Activated CD4-positive, alpha-beta T cell treated with anti-CD3 and anti-CD28 coated beads for 36 hours (primary cell): ENCODE measurements at regions of chr19 and their contacts with region 1.

Region 1: DNA sequence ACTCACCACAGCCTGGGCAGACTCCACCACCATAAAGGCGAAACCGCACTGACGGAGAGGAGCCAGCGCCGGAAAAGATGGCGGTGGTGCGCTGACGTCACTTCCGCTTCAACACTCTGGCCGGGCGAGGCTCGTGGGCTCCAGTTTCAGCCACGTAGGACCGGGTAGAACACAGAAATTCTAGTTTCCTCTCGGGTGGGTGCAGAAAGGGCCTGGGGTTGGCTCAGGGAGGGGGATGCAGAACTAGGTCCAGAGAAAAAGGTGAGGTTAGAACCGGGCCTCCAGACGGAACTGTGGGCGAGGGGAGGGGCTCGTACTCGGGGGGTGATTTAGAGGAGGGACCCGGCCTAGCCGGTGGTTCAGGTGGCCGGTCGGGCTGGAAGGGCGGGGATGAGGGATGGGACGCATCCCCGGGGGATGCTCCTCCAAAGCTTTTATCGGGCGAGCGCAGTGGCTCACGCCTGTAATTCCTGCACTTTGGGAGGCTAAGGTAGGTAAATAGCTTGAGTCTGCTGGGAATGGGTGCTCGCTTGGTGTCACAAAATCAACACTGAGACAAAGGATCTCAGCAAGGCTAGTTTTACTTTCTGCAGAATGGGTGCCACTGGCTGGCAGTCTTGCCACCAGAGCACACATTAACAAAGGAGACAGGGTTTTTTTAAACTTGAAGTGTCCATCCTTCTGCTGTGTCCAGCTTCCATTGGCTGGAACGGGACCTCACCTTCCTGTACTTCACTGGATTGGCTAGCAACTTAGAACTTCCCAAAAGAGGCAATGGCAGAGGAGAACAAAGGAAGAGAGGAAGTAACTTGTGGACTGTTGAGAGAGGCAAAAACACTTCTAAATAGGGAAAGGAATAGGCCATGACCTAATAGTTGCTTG is at the start of gene ZNF561:
- DNase-seq: peak; percentile 93
- ATAC-seq: peak; percentile 89
- H3K4me3 Mint-ChIP-seq: peak within 1 kb of the TSS; percentile 89
- H3K27ac Mint-ChIP-seq: peak within 1 kb of the TSS; percentile 96
- H3K4me1 Mint-ChIP-seq: peaks cover 23% of the 10 kb centered on the region
- H3K27me3 Mint-ChIP-seq: no peaks in the 10 kb centered on the region
- total RNA-seq, gene ZNF561: 19.1 to 22.7 TPM

Region 2: GRCh38 chr19:9140159-9140874 is 481.1 kb before region 1 on chr19 and contains the start of gene ZNF317:
- CTCF ChIA-PET with region 1: interaction called, 3 read pairs
- POLR2A ChIA-PET with region 1: no interaction called
- intact Hi-C with region 1: loop called (anchors 1 to 5 kb)
- DNase-seq: peak; percentile 94
- ATAC-seq: peak; percentile 93
- H3K4me3 Mint-ChIP-seq: peak within 1 kb of the TSS; percentile 99
- H3K27ac Mint-ChIP-seq: peak within 1 kb of the TSS; percentile 96
- H3K4me1 Mint-ChIP-seq: peaks cover 38% of the 10 kb centered on the region
- H3K27me3 Mint-ChIP-seq: peaks cover 1% of the 10 kb centered on the region
- total RNA-seq, gene ZNF317: 39.0 to 39.8 TPM

Region 3: DNA sequence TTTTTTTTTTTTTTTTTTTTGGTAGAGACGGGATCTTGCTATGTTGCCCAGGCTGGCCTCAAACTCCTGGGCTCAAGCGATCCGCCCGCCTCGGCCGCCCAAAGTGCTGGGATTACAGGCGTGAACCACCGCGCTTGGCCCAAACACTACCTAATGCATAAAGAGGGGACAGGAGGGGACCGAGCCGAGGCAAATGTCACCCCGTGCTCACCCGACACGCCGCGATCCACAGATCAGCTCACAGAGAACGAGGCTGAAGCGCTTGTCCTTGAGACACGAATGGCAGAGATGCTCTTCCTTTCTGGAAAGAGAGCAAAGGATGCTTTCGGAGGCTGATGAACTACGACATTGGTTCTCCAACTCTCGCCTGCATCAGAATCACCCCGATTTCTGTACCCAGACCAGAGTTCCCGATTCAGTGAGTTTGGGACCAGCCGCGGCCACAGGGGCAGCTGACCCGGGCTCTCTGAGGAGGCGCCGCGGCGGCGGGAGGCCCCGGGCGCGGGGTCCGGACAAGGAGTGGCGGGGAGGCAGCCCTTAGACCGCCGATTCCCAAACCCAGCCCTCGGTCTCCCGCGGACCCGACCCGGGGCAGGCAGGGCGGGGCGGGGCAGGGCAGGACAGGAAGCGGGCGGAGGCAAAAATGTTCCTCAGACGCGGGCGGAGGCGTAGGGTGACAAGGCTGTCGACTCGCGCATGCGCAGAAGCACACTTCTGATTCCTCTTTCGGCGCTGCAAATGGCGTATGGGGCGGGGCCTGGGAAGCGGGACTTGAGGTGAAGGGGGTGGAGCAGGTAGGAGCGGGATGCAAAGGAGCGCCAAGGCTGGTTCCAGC is 312.0 kb before region 1 on chr19 and contains the start of gene ZNF699:
- CTCF ChIA-PET with region 1: no interaction called
- POLR2A ChIA-PET with region 1: no interaction called
- intact Hi-C with region 1: loop called in 1 of 2 experiments (anchors 1 kb)
- DNase-seq: peak; percentile 100
- ATAC-seq: peak; percentile 90
- H3K4me3 Mint-ChIP-seq: peak within 1 kb of the TSS; percentile 97
- H3K27ac Mint-ChIP-seq: peak within 1 kb of the TSS; percentile 97
- H3K4me1 Mint-ChIP-seq: peaks cover 13% of the 10 kb centered on the region
- H3K27me3 Mint-ChIP-seq: no peaks in the 10 kb centered on the region
- total RNA-seq, gene ZNF699: 6.7 to 7.1 TPM

Region 4: DNA sequence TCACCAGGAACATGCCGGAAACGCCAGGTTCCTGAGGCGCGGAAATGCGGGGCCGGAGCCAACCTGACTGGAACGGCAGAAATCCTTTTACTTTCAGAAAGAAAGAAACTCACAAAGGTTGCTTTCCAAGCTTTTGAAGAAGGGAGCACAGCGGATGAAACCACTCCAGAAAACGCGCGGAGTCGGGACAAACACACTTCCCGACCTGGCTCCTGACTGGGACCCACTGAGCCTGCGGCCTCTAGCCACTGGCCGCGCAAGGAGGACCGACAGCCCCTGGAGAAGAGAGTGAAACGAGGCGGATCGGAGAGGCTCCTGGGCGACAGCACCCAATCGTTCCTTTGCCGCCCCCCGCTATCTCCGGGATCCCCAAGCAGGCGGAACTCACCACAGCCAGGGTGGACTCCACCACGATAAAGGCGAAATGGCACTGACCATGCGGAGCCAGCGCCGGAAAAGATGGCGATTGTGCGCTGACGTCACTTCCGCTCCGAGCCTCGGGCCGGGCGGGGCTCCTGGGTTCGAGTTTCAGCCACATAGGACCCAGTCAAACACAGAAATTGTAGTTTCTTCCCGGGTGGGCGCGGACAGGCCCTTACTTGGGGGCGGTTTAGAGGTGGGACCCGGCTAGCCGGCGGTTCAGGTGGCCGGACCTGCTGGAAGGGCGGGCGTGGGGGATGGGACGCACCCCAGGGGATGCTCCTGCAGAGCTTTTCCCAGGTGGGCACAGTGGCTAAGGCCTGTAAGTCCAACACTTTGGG is 37.1 kb before region 1 on chr19 and contains the start of gene ZNF121:
- CTCF ChIA-PET with region 1: interaction called, 3 read pairs
- POLR2A ChIA-PET with region 1: no interaction called
- intact Hi-C with region 1: loop called (anchors 1 kb)
- DNase-seq: peak; percentile 91
- ATAC-seq: peak; percentile 82
- H3K4me3 Mint-ChIP-seq: peak within 1 kb of the TSS; percentile 93
- H3K27ac Mint-ChIP-seq: peak within 1 kb of the TSS; percentile 94
- H3K4me1 Mint-ChIP-seq: peaks cover 29% of the 10 kb centered on the region
- H3K27me3 Mint-ChIP-seq: peaks cover 4% of the 10 kb centered on the region
- total RNA-seq, gene ZNF121: 71.4 to 75.3 TPM

Region 5: DNA sequence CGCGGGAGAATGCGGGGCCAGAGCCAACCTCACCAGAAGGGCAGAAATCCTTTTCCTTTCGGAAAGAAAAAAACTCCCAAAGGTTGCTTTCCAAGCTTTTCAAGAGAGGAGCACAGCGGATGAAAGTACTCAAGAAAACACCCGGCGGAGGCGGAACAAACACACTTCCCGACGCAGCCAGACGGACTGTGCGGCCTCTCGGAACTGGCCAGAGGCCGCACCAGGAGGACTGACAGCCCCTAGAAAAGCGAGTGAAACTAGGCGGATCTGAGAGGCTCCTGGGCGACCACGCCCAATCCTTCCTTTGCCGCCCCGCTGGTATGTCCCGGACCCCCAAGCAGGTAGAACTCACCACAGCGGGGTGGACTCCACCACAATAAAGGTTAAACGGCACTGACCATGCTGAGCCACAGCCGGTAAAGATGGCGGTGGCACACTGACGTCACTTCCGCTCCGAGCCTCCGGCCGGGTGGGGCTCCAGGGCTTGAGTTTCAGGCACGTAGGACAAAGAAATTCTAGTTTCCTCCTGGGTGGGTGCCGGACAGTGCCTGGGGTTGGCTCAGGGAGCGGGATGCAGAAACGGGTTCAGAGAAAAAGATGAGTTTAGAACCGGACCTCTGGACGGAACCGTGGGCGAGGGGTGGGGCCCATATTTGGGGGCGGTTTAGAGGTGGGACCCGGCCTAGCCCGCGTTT is 53.4 kb after region 1 on chr19 and contains the start of gene ZNF562:
- CTCF ChIA-PET with region 1: no interaction called
- POLR2A ChIA-PET with region 1: no interaction called
- intact Hi-C with region 1: loop called (anchors 1 to 2 kb)
- DNase-seq: peak; percentile 91
- ATAC-seq: peak; percentile 78
- H3K4me3 Mint-ChIP-seq: peak within 1 kb of the TSS; percentile 94
- H3K27ac Mint-ChIP-seq: peak within 1 kb of the TSS; percentile 97
- H3K4me1 Mint-ChIP-seq: peaks cover 30% of the 10 kb centered on the region
- H3K27me3 Mint-ChIP-seq: no peaks in the 10 kb centered on the region
- total RNA-seq, gene ZNF562: 29.9 to 39.7 TPM

Region 6: GRCh38 chr19:9785367-9786331 is 164.3 kb after region 1 on chr19:
- CTCF ChIA-PET with region 1: no interaction called
- POLR2A ChIA-PET with region 1: no interaction called
- intact Hi-C with region 1: loop called in 1 of 2 experiments (anchors 1 kb)
- DNase-seq: peak; percentile 100
- ATAC-seq: peak; percentile 89
- H3K4me3 Mint-ChIP-seq: peak overlapping the region; percentile 84
- H3K27ac Mint-ChIP-seq: peak overlapping the region; percentile 98
- H3K4me1 Mint-ChIP-seq: peaks cover 26% of the 10 kb centered on the region
- H3K27me3 Mint-ChIP-seq: no peaks in the 10 kb centered on the region

Region 7: DNA sequence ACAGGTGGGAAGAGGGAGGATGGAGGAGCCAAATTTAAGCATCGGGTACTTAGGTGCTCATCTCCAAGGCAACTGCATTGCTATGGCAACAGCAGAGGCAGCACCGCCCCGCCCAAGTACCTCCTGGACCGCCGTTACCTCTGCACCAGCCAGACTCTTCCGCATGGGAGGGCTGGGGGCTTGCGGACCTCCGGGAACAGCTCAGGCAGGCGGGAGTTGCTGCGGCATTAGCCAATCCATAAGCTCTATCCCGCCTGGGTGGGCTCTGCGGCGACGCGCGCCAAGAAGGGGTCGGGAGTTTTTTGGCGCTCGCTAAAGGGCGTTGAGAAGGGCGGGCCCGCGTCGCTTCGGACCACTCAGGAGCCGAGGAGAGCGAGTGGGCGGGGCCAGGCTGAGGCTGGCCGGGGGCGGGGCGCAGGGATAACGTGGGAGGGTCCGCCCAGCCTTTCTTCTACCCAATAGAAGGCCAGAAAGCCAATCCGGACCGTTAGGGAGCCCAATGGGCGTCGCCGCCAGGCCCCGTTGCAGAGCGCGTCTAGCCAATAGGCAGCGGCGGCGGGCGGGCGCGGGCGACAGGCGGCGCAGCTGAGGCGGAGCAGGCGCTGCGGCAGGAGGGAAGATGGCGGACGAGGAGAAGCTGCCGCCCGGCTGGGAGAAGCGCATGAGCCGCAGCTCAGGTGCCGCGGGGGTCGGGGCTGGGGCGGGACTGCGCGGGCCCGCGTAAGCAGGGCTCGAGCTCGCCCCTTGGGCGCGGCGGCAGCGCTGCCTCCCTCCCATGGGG is 213.5 kb after region 1 on chr19 and contains the start of gene PIN1:
- CTCF ChIA-PET with region 1: no interaction called
- POLR2A ChIA-PET with region 1: no interaction called
- intact Hi-C with region 1: loop called in 1 of 2 experiments (anchors 1 kb)
- DNase-seq: peak; percentile 100
- ATAC-seq: peak; percentile 99
- H3K4me3 Mint-ChIP-seq: peak within 1 kb of the TSS; percentile 86
- H3K27ac Mint-ChIP-seq: peak within 1 kb of the TSS; percentile 88
- H3K4me1 Mint-ChIP-seq: peaks cover 20% of the 10 kb centered on the region
- H3K27me3 Mint-ChIP-seq: no peaks in the 10 kb centered on the region
- total RNA-seq, gene PIN1: 70.4 to 74.2 TPM